Activated CD8-positive, alpha-beta memory T cell treated with anti-CD3 and anti-CD28 coated beads, Interleukin-2, amount 10 ng/mL, durations not matched to agents 7 days and 5 days (primary cell): ENCODE measurements at regions of chr9 and their contacts with region 1.

Region 1: DNA sequence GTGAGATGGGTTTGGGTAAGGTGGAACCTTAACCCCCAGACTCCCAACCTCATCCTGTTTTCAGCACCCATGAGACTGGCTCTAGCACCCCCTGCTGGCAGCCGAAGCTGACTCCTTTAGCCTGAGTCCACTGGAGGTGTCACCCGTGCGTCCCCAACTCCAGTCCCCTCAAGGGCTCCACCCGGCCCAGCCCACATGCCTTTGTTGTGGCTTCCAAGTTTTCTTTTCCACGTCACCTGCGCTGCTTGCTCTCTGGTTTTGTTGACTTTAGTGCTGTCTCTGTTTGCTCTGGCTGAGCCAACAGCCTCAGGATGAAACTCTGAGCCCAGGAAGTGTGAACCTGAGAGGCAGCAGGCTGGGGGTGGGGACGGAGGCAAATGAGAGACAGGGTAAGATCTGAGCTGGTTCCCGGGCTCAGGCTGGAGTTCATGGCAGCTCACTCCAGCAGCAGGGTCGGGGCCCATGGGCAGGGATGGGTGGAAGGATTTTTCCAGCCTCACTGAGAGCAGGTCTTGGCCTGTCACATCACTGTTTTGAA is 13.2 kb upstream of the AQP7 start:
- DNase-seq: peak; percentile 93
- ATAC-seq: peak; percentile 96
- H3K4me3 Mint-ChIP-seq: no peak overlapping the region
- H3K27ac Mint-ChIP-seq: peak overlapping the region; percentile 85
- H3K4me1 Mint-ChIP-seq: peaks cover 42% of the 10 kb centered on the region
- H3K27me3 Mint-ChIP-seq: no peaks in the 10 kb centered on the region

Region 2: GRCh38 chr9:33139421-33140228 is 275.9 kb before region 1 on chr9:
- CTCF ChIA-PET with region 1: no interaction called
- DNase-seq: no peak
- ATAC-seq: no peak
- H3K4me3 Mint-ChIP-seq: no peak overlapping the region
- H3K27ac Mint-ChIP-seq: peak overlapping the region; percentile 16
- H3K4me1 Mint-ChIP-seq: peaks cover 79% of the 10 kb centered on the region
- H3K27me3 Mint-ChIP-seq: no peaks in the 10 kb centered on the region

Region 3: GRCh38 chr9:33290247-33291030 is 125.1 kb before region 1 on chr9 and contains the start of gene NFX1:
- CTCF ChIA-PET with region 1: interaction called, 11 read pairs
- DNase-seq: peak; percentile 99
- ATAC-seq: peak; percentile 92
- H3K4me3 Mint-ChIP-seq: peak within 1 kb of the TSS; percentile 98
- H3K27ac Mint-ChIP-seq: peak within 1 kb of the TSS; percentile 100
- H3K4me1 Mint-ChIP-seq: peaks cover 61% of the 10 kb centered on the region
- H3K27me3 Mint-ChIP-seq: peaks cover 2% of the 10 kb centered on the region
- total RNA-seq, gene NFX1: 46.3 to 48.1 TPM

Region 4: GRCh38 chr9:33404788-33405362 is 10.7 kb before region 1 on chr9:
- CTCF ChIA-PET with region 1: interaction called, 14 read pairs
- DNase-seq: no peak
- ATAC-seq: no peak
- H3K4me3 Mint-ChIP-seq: no peak overlapping the region
- H3K27ac Mint-ChIP-seq: no peak overlapping the region
- H3K4me1 Mint-ChIP-seq: no peaks in the 10 kb centered on the region
- H3K27me3 Mint-ChIP-seq: no peaks in the 10 kb centered on the region

Region 5: DNA sequence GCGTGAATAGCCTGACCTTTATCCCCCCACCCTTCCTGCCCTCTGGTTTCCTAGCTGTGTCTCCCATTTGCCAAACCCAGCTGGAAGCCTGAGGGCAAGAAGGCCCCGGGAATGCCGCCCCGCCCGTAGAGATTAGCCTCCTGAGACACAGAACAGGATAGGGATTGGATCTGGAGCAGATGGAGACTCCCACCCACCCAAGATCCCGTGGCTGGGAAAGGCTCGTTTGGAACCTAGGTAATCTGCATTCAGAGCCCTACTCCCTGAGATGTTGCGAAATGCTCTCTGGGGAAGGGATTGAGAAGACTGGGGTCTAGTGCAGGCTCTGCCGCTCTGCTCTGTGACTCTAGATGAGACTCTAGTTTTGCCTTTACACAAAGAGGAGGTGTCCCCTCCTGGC is 20.9 kb after region 1 on chr9:
- CTCF ChIA-PET with region 1: interaction called, 23 read pairs
- DNase-seq: no peak
- ATAC-seq: no peak
- H3K4me3 Mint-ChIP-seq: no peak overlapping the region
- H3K27ac Mint-ChIP-seq: no peak overlapping the region
- H3K4me1 Mint-ChIP-seq: peaks cover 10% of the 10 kb centered on the region
- H3K27me3 Mint-ChIP-seq: no peaks in the 10 kb centered on the region

Region 6: GRCh38 chr9:33458444-33458843 is 42.9 kb after region 1 on chr9:
- CTCF ChIA-PET with region 1: interaction called, 135 read pairs
- DNase-seq: peak; percentile 70
- ATAC-seq: peak; percentile 74
- H3K4me3 Mint-ChIP-seq: no peak overlapping the region
- H3K27ac Mint-ChIP-seq: peak overlapping the region; percentile 79
- H3K4me1 Mint-ChIP-seq: peaks cover 46% of the 10 kb centered on the region
- H3K27me3 Mint-ChIP-seq: no peaks in the 10 kb centered on the region

Region 7: DNA sequence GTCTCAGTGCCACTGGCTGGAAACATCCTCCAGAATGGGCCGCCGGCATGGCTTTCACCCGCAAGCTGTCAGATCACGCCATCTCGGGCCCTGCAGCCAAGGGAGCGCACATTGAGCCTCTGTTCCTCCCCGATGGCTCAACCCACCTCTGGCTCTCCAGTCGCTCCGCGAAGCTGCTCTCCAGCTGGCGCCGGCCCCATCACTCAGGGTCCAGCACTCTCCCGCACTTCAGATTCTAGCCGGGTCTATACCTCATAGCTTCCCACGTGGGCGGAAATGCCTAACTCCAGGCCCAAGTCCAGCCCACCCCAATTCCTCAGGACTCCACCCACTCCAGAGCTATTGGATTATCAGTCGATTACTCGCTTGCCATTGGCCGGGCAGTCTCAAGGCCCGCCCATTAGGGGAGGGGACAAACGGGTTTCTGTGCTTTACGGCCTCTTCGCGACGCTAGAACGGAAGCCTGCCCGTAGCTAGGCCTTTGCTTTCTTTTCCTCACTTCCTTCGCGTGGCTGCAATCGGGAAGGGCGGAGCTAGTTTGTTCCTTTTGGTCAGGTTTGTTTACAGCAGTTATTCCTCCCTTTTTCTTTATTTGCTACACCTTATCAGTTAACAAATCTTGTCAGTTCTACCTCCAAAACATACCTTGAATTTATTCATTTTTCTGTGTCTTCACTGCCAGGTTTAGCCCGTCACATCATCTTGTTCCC is 58.2 kb after region 1 on chr9 and contains the start of gene NOL6:
- CTCF ChIA-PET with region 1: interaction called, 17 read pairs
- DNase-seq: peak; percentile 99
- ATAC-seq: peak; percentile 100
- H3K4me3 Mint-ChIP-seq: peak within 1 kb of the TSS; percentile 98
- H3K27ac Mint-ChIP-seq: peak within 1 kb of the TSS; percentile 91
- H3K4me1 Mint-ChIP-seq: peaks cover 30% of the 10 kb centered on the region
- H3K27me3 Mint-ChIP-seq: no peaks in the 10 kb centered on the region
- total RNA-seq, gene NOL6: 34.3 to 43.1 TPM